ENCODE measurements at regions of chr5 and their contacts with region 1.

Region 1: DNA sequence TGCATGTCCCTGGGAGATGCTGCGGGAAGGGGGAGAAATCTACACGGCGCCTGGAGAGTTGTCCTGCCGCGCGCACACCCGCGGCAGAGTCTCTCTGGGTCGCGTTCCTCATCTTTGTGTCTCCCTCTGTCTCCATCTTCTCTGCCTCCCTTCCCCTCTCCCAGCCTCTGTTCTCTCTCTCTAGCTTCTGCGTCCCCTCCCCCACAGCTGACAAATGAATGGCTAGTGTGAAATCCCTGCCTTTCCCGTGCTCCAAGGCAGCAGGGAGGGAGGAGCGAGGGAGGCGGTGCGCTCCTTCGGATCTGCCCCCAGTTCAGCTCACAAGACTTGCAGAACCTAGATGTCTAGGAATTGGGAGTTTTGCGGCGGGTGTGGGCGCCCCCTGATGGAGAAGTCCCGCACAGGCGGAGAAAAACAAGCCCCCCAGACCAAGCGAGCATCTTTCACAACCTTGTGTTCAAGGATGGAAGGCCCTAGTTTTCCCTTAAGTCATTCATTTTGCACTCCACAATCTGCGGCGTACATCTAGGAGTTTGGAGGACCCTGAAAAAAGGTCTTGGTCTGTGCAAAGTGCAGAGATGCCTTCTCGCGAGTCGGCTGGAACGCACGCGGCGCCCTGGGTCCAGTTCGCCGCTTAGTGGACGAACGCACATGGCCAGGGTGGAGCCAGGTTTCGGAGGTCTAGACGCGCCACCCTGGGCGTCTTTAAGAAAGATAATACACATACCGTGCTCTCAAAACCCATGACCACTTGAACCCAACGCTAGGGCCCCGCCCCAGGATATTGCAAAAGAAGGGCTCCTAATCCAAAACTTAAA is 2.0 kb downstream of the VCAN start:
- DNase-seq: peak; percentile 63
- ATAC-seq: peak; percentile 88
- H3K4me3 ChIP-seq: peak overlapping the region; percentile 49 to 76
- H3K27ac ChIP-seq: no peak overlapping the region
- H3K4me1 ChIP-seq: peaks cover 9% of the 10 kb centered on the region
- H3K27me3 ChIP-seq: peaks cover 46% of the 10 kb centered on the region
- CTCF ChIP-seq: peak; percentile 91

Region 2: GRCh38 chr5:82351754-82352145 is 1121.8 kb before region 1 on chr5:
- CTCF ChIA-PET with region 1: no interaction called
- POLR2A ChIA-PET with region 1: no interaction called
- in situ Hi-C with region 1: no loop called
- intact Hi-C with region 1: loop called (anchors 2 kb)
- DNase-seq: peak; percentile 52
- ATAC-seq: peak; percentile 93
- H3K4me3 ChIP-seq: no peak overlapping the region
- H3K27ac ChIP-seq: no peak overlapping the region
- H3K4me1 ChIP-seq: no peaks in the 10 kb centered on the region
- H3K27me3 ChIP-seq: no peaks in the 10 kb centered on the region
- CTCF ChIP-seq: peak; percentile 81

Region 3: DNA sequence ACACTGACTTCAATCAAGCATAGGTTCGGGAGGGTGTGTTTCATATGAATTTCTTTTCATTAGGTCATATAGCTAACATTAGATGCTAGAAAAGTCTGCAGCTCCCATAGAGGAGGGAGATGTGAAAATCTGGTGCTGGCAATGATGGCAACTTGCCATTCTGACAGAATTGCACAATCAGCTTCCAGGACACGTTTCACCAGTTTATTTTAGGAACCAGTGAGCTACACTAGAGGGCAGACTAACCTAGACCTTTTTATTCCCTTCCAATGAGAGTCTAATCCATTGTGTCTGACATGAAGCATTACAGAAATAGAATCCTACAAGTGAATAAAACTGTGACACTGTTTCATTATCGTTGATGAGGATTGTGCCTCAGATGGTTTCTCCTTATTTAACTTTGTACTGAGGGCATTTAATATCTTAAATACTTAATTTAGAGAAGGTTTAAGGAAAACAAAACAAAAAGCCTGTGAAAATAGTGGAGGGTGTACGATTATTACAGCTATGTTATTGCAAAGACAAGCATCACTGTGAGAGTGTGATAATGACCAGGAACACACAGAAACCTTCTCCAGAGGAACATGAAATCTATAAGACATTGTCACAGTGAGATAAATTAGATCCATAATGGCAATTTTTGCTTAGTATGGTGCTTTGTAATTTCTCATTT is 832.1 kb before region 1 on chr5:
- CTCF ChIA-PET with region 1: no interaction called
- POLR2A ChIA-PET with region 1: no interaction called
- in situ Hi-C with region 1: no loop called
- intact Hi-C with region 1: loop called (anchors 5 kb)
- DNase-seq: peak; percentile 57
- ATAC-seq: peak; percentile 73; the same call in 1 of the 2 replicates
- H3K4me3 ChIP-seq: no peak overlapping the region
- H3K27ac ChIP-seq: no peak overlapping the region
- H3K4me1 ChIP-seq: no peaks in the 10 kb centered on the region
- H3K27me3 ChIP-seq: no peaks in the 10 kb centered on the region
- CTCF ChIP-seq: peak; percentile 72

Region 4: GRCh38 chr5:83058726-83059125 is 414.8 kb before region 1 on chr5:
- CTCF ChIA-PET with region 1: no interaction called
- POLR2A ChIA-PET with region 1: no interaction called
- in situ Hi-C with region 1: no loop called
- intact Hi-C with region 1: loop called (anchors 10 kb)
- DNase-seq: no peak
- ATAC-seq: no peak
- H3K4me3 ChIP-seq: no peak overlapping the region
- H3K27ac ChIP-seq: no peak overlapping the region
- H3K4me1 ChIP-seq: no peaks in the 10 kb centered on the region
- H3K27me3 ChIP-seq: no peaks in the 10 kb centered on the region
- CTCF ChIP-seq: no peak

Region 5: DNA sequence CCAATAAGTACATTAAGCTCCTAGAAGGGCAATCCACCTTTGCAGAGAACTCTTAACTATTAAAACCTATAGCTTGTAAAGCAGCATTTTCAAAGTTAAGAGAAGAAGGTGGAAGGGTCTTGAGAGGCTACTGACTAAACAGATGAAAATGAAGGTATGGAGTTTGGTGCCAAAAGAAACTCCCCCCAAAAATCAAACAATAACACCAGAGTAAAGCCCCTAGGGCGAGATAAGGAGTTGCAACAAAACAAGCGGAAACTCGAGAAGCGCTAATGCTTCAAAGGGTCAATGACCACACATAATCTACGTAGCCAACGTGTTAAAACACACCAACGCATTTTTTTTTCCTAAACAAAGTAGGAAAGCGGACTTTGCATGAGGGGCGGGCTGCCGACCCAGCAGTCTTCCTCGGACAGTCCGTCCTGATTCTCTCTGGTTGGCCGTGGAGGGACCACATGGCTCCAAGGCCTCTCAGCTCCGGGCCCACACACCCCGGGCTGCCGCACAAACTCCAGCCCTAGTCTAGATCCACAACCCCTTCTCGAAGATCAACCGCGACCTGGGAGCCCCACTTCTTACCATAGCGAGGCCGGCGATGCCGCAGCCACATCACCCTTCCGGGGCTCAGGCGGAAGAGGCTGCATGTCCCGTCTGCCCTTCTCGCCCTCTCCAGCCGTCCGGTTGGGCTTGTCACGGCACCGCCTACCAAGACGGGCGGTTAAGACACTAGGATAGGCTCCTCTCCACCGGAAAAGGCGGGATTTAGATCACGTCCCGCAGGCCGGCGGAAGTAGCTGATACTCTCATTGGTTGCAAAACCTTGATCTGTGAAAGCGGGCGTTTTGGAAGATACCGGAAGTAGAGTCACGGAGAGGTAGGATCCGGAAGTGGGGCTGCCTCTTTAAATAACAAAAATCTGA is 396.6 kb before region 1 on chr5 and contains the starts of genes TMEM167A and XRCC4:
- CTCF ChIA-PET with region 1: no interaction called
- POLR2A ChIA-PET with region 1: no interaction called
- in situ Hi-C with region 1: no loop called
- intact Hi-C with region 1: loop called (anchors 5 kb)
- DNase-seq: peak; percentile 89
- ATAC-seq: peak; percentile 100
- H3K4me3 ChIP-seq: peak within 1 kb of the TSS; percentile 96 to 100
- H3K27ac ChIP-seq: peak within 1 kb of the TSS; percentile 99
- H3K4me1 ChIP-seq: peaks cover 8% of the 10 kb centered on the region; the same call in 1 of the 2 replicates
- H3K27me3 ChIP-seq: no peaks in the 10 kb centered on the region
- CTCF ChIP-seq: no peak
- total RNA-seq, gene TMEM167A: 117 TPM
- total RNA-seq, gene XRCC4: 12.5 TPM

Measured in Panc1 (cell line).